Activated CD4-positive, alpha-beta T cell treated with anti-CD3 and anti-CD28 coated beads for 36 hours (primary cell): ENCODE measurements at regions of chr3 and their contacts with region 1.

Region 1: GRCh38 chr3:179322286-179323196 is at the start of gene ZNF639:
- DNase-seq: peak; percentile 91
- ATAC-seq: peak; percentile 78
- H3K4me3 Mint-ChIP-seq: peak within 1 kb of the TSS; percentile 87
- H3K27ac Mint-ChIP-seq: peak within 1 kb of the TSS; percentile 93
- H3K4me1 Mint-ChIP-seq: peaks cover 28% of the 10 kb centered on the region
- H3K27me3 Mint-ChIP-seq: no peaks in the 10 kb centered on the region
- total RNA-seq, gene ZNF639: 31.0 to 39.6 TPM

Region 2: GRCh38 chr3:177824190-177824786 is 1498.3 kb before region 1 on chr3:
- CTCF ChIA-PET with region 1: no interaction called
- POLR2A ChIA-PET with region 1: no interaction called
- intact Hi-C with region 1: no loop called
- DNase-seq: no peak
- ATAC-seq: no peak
- H3K4me3 Mint-ChIP-seq: no peak overlapping the region
- H3K27ac Mint-ChIP-seq: no peak overlapping the region
- H3K4me1 Mint-ChIP-seq: peaks cover 32% of the 10 kb centered on the region
- H3K27me3 Mint-ChIP-seq: no peaks in the 10 kb centered on the region

Region 3: DNA sequence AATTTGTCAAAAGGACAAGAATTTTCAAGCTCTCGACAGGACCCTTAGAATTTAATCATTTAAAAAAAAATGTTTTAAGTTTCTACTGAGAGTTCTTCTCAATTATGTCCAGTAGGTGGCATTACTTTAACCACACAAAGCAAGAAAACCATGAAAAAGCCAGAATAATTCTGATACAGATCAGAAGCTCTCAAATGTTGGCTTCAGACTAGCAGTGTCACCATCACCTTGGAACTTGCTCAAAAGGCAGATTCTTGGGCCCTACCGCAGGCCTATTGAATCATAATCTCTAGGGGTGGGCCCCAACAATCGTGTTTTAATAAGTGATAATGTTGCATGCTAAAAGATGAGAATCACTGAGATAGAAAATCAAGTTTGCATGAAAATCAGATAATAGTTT is 885.8 kb before region 1 on chr3:
- CTCF ChIA-PET with region 1: no interaction called
- POLR2A ChIA-PET with region 1: no interaction called
- intact Hi-C with region 1: loop called in 1 of 2 experiments (anchors 2 kb)
- DNase-seq: no peak
- ATAC-seq: no peak
- H3K4me3 Mint-ChIP-seq: no peak overlapping the region
- H3K27ac Mint-ChIP-seq: no peak overlapping the region
- H3K4me1 Mint-ChIP-seq: no peaks in the 10 kb centered on the region
- H3K27me3 Mint-ChIP-seq: no peaks in the 10 kb centered on the region

Region 4: DNA sequence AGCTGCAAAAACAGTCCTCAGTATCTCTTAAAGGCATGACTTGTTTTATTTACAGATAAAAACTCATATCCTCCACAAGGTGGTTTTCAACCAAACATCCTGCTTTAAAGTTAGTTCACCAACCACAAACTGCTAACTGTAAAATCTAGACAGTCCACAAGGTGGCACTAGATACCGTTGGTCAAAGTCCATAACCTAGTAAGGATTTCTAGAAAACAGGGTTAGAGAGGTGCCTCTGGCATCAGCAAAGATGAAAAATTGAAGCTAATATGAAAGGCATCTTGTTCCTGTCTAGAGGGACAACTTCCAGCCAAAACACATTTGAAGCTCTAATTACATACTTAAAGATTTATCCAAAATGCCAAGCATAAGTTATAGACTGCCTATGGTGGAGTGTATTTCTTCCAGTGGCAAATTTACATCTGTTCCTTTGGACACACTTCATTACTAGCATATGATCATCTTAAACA is 307.0 kb before region 1 on chr3:
- CTCF ChIA-PET with region 1: interaction called, 12 read pairs
- POLR2A ChIA-PET with region 1: no interaction called
- intact Hi-C with region 1: loop called in 1 of 2 experiments (anchors 1 kb)
- DNase-seq: peak; percentile 65
- ATAC-seq: peak; percentile 83
- H3K4me3 Mint-ChIP-seq: no peak overlapping the region
- H3K27ac Mint-ChIP-seq: no peak overlapping the region
- H3K4me1 Mint-ChIP-seq: peaks cover 35% of the 10 kb centered on the region
- H3K27me3 Mint-ChIP-seq: peaks cover 4% of the 10 kb centered on the region

Region 5: DNA sequence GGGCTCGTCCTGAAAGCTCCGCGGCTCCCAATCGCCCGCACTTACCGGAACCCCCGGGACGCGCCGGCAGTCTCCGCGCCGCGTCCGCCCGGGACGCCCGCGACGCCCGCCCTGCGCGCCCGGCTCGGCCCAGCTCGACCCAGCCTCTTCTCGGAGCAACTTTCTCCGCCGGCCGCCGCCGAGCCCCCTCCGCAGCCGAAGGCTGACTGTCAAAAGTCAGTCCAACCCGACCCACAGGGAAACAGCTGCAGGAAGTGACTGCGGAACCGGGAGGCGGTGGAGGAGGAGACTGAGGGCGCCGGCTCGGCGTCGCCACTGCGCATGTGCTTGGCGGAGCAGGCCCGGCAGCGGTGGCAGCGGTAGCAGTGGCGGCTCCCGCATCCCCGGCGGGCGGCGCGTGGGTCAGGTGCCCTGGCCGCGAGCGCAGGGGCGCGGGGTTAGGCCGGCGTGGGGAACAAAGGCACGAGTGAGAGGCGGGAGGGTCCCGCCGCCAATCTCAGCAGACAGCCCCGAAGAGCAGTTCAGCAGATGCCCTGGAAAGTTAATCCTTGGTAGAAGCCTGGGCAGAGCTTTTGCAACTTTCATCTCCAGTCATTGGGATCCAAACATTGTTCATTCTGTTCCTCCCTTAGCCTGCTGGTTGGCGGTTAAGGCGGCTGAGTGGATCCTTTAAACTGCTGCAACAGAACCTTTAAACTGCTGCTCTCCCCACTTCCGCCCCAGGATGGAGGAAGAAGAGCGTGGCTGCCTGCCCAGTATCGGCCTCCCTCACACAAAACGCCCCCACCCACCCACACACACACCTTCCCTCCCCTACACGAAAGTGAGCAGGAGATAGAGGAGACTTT is 250.8 kb before region 1 on chr3 and contains the start of gene ZMAT3:
- CTCF ChIA-PET with region 1: interaction called, 4 read pairs
- POLR2A ChIA-PET with region 1: no interaction called
- intact Hi-C with region 1: loop called (anchors 1 to 2 kb)
- DNase-seq: peak; percentile 90
- ATAC-seq: peak; percentile 86
- H3K4me3 Mint-ChIP-seq: peak within 1 kb of the TSS; percentile 95
- H3K27ac Mint-ChIP-seq: peak within 1 kb of the TSS; percentile 92
- H3K4me1 Mint-ChIP-seq: peaks cover 41% of the 10 kb centered on the region
- H3K27me3 Mint-ChIP-seq: no peaks in the 10 kb centered on the region
- total RNA-seq, gene ZMAT3: 9.5 to 9.9 TPM

Region 6: GRCh38 chr3:179108086-179108485 is 214.5 kb before region 1 on chr3:
- CTCF ChIA-PET with region 1: interaction called, 20 read pairs
- POLR2A ChIA-PET with region 1: no interaction called
- intact Hi-C with region 1: no loop called
- DNase-seq: no peak
- ATAC-seq: no peak
- H3K4me3 Mint-ChIP-seq: no peak overlapping the region
- H3K27ac Mint-ChIP-seq: no peak overlapping the region
- H3K4me1 Mint-ChIP-seq: no peaks in the 10 kb centered on the region
- H3K27me3 Mint-ChIP-seq: peaks cover 5% of the 10 kb centered on the region

Region 7: DNA sequence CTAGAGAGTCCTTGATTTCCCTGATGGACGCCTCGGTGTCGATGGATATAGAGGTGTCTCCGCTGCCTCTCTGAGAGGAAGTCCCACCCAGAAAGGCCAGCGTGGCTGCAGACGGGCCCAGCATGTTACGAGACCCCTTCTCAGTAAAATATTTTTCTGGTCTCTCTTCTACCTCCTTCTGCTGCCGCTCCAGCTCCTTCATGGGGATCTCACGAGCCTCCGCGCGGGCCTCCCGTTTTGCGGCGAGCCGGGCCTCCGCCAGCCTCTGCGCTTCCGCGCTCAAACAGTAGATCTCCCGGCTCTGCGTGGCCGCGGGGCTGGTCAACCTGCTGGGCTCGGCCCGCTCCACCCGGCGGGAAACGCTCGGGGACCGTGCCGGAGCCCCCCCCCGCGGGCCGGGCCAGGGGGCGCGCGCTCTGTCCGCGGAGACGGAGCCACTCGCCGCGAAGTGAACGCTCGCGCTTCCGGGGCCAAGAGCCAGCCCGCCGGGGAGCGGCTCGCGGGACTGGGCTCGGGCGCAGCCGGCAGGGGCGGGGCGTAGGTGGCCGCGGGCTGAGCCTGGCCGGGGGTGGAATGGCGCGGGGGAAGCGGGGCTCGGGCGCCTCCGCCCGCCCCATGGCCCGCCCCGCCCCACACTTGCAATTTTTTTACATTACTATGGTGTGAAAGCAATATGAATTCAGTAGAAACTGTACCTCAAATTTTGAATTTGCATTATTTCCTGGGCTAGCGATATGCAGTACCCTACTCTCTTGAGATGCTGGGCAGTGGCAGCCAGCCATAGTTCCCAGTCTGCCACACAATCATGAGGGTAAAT is 61.4 kb before region 1 on chr3:
- CTCF ChIA-PET with region 1: interaction called, 3 read pairs
- POLR2A ChIA-PET with region 1: interaction called, 3 read pairs
- intact Hi-C with region 1: loop called (anchors 2 to 5 kb)
- DNase-seq: peak; percentile 80
- ATAC-seq: peak; percentile 93
- H3K4me3 Mint-ChIP-seq: peak overlapping the region; percentile 64
- H3K27ac Mint-ChIP-seq: no peak overlapping the region
- H3K4me1 Mint-ChIP-seq: peaks cover 10% of the 10 kb centered on the region
- H3K27me3 Mint-ChIP-seq: no peaks in the 10 kb centered on the region

Region 8: GRCh38 chr3:179347345-179348194 is 25.0 kb after region 1 on chr3 and contains the start of gene MFN1:
- CTCF ChIA-PET with region 1: interaction called, 4 read pairs
- POLR2A ChIA-PET with region 1: interaction called, 5 read pairs
- intact Hi-C with region 1: loop called (anchors 1 kb)
- DNase-seq: peak; percentile 94
- ATAC-seq: peak; percentile 98
- H3K4me3 Mint-ChIP-seq: peak within 1 kb of the TSS; percentile 99
- H3K27ac Mint-ChIP-seq: peak within 1 kb of the TSS; percentile 93
- H3K4me1 Mint-ChIP-seq: peaks cover 22% of the 10 kb centered on the region
- H3K27me3 Mint-ChIP-seq: no peaks in the 10 kb centered on the region
- total RNA-seq, gene MFN1: 24.4 to 30.4 TPM